Left colon (tissue), 2 donors: ENCODE measurements at regions of chr2 and their contacts with region 1.

Region 1: DNA sequence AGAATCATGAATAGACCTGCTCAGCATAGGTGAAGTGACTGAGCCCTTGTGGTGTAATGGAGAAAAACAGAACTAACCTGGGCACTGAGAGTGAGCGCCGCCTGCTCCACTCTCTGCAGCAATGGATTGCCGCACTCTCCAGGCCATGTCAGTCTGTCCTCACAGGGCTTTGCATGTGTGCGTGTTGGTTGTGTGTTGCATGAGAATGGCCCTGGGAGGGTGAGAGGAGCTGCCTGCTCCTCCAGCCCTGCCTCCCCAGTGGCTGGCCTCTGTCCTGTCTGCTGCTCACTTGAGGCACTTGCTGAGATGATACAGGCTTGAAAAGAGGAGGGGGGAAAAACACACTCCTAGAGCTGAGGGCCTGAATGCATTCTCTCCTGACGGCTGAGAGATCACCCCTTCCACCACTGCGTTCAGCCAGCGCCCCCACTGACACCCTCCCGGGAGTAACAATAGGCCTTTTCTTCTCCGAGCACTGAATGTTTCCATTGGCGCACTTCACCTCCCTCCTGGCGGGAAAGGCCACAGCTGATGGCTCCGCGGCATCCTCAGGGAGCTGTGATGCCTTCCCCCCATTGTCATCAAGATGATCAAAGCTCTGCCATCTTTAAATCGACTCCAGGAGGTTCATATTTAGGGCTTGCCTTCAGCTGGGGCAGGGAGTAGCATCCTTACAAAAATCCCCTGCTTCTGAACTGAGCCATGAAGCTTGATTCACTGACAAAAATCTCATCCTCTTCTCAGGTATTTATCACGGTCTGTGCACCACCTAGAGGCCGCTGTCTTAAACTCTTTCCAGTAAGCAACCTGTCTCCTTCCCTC is 49.9 kb upstream of the DAPL1 start:
- DNase-seq: peak in 1 of 2 donors; percentile 63
- ATAC-seq: peak; percentile 64

Region 2: DNA sequence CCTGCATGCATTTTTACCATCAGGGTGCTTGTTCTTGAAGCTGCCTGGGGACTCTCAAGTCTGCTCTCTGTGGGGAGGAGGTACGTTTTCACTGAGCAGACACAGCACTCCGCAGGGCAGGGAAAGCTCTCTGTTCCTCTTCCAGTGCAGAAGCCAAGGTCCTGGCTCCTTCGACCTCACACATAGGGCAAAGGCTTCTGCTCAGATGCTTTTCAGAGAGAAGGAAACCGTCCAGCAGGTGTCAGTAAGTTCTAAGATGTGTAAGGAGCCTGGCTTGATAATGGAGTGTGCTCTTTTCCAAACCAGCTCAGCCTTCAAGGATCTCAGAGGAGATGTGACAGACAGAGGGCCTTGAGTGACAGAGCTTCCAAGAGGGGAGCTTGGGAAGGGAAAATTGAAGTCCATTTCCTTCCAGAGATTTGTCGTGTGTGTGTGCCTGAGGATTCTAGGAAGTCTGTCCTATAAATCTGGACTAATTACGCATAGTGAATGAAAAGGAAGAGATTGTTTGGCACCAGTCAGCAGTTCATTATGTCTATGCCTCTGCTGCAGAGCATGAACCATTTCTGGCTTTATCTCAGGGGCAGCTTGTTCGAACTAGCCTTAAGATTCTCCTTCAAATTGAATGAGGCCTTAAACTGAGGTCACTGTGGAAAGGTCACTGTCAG is 710.9 kb before region 1 on chr2:
- intact Hi-C with region 1: loop called (anchors 5 to 10 kb)
- DNase-seq: peak; percentile 31 to 40
- ATAC-seq: peak; percentile 99

Region 3: DNA sequence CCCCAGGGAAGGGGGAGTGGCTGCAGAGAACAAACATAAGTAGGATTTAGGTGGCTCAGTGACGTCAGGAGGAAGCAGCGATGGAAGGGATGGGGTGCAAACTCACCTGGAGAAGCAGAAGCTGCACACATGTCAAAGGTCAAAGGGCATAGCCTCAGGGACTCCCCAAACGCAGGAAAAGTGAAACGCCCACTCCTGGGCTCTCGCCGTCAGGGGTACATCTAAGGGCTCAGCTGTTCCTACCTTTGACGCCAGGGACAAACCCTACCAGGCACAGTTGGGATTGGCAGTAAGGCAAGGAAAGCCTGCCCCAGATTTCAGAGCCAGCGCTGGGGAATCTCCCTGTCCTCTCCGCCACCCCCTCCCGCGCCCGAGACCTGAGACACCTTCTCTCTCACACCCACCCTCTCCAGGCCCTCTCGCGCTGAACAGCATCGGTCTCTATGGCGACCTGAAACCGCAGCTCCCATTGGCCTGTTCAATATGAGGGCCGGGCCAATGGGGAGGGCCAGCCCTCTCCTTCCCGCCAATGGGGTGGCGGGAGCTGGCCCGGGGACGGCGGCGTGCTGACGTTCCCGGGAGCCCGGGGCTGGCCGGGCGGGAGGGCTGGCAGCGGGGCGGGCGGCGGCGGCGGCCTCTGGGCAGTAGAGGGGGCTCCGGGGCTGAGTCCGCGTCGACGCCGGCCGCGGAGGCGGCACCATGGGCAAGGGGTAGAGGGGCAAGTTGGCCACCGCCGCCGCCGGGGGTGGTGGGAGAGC is 288.8 kb before region 1 on chr2 and contains the starts of genes CCDC148 and PKP4:
- intact Hi-C with region 1: loop called in 1 of 2 experiments (anchors 5 kb)
- DNase-seq: peak; percentile 86 to 89
- ATAC-seq: peak; percentile 83
- total RNA-seq, gene CCDC148: 0.73 TPM in 1 of 2 donors, not detected in the other
- total RNA-seq, gene PKP4: 36.9 to 55.5 TPM